Activated CD8-positive, alpha-beta T cell treated with anti-CD3 and anti-CD28 coated beads for 36 hours (primary cell): ENCODE measurements at regions of chr14 and their contacts with region 1.

Region 1: DNA sequence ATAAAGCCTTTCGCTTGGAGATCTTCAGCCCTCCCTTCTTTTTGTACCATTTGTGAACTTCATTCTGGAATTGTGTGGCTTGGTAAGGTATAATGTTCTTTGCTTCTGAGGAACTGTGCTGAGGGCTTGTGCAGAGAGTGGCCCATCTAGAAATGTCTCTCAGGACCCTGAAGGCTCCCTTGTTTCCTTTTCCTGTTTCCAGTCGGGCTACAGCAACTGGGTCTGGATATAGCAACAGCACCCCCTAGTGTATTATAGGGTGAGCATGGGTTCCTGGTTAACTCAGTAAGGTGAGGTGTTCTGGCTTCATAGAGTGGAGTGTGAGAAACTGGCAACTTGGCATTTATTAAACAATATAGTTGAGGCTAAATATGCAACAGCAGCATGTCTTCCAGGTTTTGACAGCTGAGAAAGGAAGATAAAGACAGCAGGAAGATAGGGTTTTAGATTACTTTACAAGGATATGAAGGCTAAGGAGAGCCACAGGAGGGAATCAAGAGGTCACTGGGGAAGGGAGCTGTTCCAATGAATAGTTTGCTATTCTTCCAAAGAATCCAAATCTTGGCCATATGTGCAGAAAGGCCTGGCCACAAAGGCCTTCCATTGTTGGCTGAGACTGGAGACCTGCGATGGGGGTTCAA is 49.1 kb upstream of the RNU6-8 start:
- DNase-seq: peak; percentile 65
- ATAC-seq: peak; percentile 95
- H3K4me3 Mint-ChIP-seq: no peak overlapping the region
- H3K27ac Mint-ChIP-seq: no peak overlapping the region
- H3K4me1 Mint-ChIP-seq: no peaks in the 10 kb centered on the region
- H3K27me3 Mint-ChIP-seq: no peaks in the 10 kb centered on the region
- CTCF ChIP-seq: peak; percentile 92

Region 2: DNA sequence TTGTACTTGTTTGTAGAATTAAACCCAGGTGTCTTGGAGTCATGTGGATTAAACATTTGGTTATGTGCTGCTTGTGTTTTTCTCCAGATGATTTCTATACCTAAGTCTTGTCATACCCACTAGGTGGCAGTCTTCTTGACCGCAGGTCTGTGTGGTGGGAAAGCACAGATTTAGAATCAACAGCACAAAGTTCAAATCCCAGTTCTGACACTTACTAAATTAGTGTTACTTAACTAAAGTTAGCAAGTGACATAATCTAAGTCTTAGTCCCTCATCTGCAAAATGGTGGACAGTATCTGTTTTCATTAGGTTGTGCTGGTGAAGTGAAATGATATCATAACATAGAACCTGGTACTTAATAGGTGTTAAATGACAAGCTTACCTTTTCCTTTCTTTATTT is 326.0 kb before region 1 on chr14:
- CTCF ChIA-PET with region 1: interaction called, 70 read pairs
- POLR2A ChIA-PET with region 1: interaction called, 3 read pairs
- intact Hi-C with region 1: loop called (anchors 5 kb)
- DNase-seq: peak; percentile 30
- ATAC-seq: peak; percentile 39
- H3K4me3 Mint-ChIP-seq: no peak overlapping the region
- H3K27ac Mint-ChIP-seq: no peak overlapping the region
- H3K4me1 Mint-ChIP-seq: no peaks in the 10 kb centered on the region
- H3K27me3 Mint-ChIP-seq: no peaks in the 10 kb centered on the region
- CTCF ChIP-seq: peak; percentile 62

Region 3: DNA sequence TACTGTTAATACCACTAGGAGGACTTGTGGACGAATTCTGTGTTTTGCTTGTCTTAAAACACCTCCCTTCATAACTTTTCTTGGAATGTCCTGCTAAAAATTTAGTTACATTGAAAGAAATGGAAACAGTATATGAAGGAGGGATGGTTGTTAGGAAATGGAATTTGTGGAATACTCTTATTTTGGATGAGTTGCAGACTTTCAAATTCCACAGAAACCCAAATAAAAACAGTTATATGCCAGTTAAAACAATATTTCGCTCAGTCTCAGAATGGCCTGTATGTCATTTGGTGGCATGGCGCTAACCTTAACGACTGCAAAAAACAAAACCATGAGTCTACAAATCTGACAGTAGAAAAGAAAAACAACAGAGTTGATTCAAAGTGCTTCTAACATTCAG is 187.2 kb before region 1 on chr14:
- CTCF ChIA-PET with region 1: interaction called, 76 read pairs
- POLR2A ChIA-PET with region 1: no interaction called
- intact Hi-C with region 1: no loop called
- DNase-seq: no peak
- ATAC-seq: no peak
- H3K4me3 Mint-ChIP-seq: no peak overlapping the region
- H3K27ac Mint-ChIP-seq: no peak overlapping the region
- H3K4me1 Mint-ChIP-seq: no peaks in the 10 kb centered on the region
- H3K27me3 Mint-ChIP-seq: peaks cover 6% of the 10 kb centered on the region
- CTCF ChIP-seq: no peak

Region 4: GRCh38 chr14:32076278-32077080 is 175.7 kb before region 1 on chr14:
- CTCF ChIA-PET with region 1: interaction called, 76 read pairs
- POLR2A ChIA-PET with region 1: interaction called, 3 read pairs
- intact Hi-C with region 1: loop called (anchors 1 kb)
- DNase-seq: peak; percentile 77
- ATAC-seq: peak; percentile 72
- H3K4me3 Mint-ChIP-seq: peak overlapping the region; percentile 87
- H3K27ac Mint-ChIP-seq: peak overlapping the region; percentile 89
- H3K4me1 Mint-ChIP-seq: peaks cover 32% of the 10 kb centered on the region
- H3K27me3 Mint-ChIP-seq: peaks cover 3% of the 10 kb centered on the region
- CTCF ChIP-seq: no peak

Region 5: GRCh38 chr14:32478050-32478449 is 225.9 kb after region 1 on chr14:
- CTCF ChIA-PET with region 1: no interaction called
- POLR2A ChIA-PET with region 1: no interaction called
- intact Hi-C with region 1: no loop called
- DNase-seq: no peak
- ATAC-seq: no peak
- H3K4me3 Mint-ChIP-seq: no peak overlapping the region
- H3K27ac Mint-ChIP-seq: no peak overlapping the region
- H3K4me1 Mint-ChIP-seq: no peaks in the 10 kb centered on the region
- H3K27me3 Mint-ChIP-seq: no peaks in the 10 kb centered on the region
- CTCF ChIP-seq: no peak

Region 6: GRCh38 chr14:32560209-32560857 is 308.2 kb after region 1 on chr14:
- CTCF ChIA-PET with region 1: interaction called, 11 read pairs
- POLR2A ChIA-PET with region 1: no interaction called
- intact Hi-C with region 1: no loop called
- DNase-seq: peak; percentile 52
- ATAC-seq: peak; percentile 68
- H3K4me3 Mint-ChIP-seq: no peak overlapping the region
- H3K27ac Mint-ChIP-seq: no peak overlapping the region
- H3K4me1 Mint-ChIP-seq: peaks cover 11% of the 10 kb centered on the region
- H3K27me3 Mint-ChIP-seq: no peaks in the 10 kb centered on the region
- CTCF ChIP-seq: peak; percentile 75